ENCODE measurements at regions of chr2 and their contacts with region 1.

Region 1: GRCh38 chr2:181123798-181124231 is 143.4 kb downstream of the UBE2E3 start:
- DNase-seq: peak in 8 of 9 donors; percentile 54 to 91 (median 83)
- ATAC-seq: peak; percentile 98
- H3K4me3 ChIP-seq: peak overlapping the region; percentile 37
- H3K4me3 Mint-ChIP-seq: peak overlapping the region; percentile 73 to 92 (median 82)
- H3K27ac ChIP-seq: peak overlapping the region; percentile 83
- H3K27ac Mint-ChIP-seq: peak overlapping the region; percentile 94 to 100 (median 98)
- H3K4me1 ChIP-seq: peaks cover 39 to 47% of the 10 kb centered on the region in 2 donors
- H3K4me1 Mint-ChIP-seq: peaks cover 27 to 81% (median 78%) of the 10 kb centered on the region in 7 donors
- H3K27me3 ChIP-seq: no peaks in the 10 kb centered on the region
- H3K27me3 Mint-ChIP-seq: no peaks in the 10 kb centered on the region

Region 2: DNA sequence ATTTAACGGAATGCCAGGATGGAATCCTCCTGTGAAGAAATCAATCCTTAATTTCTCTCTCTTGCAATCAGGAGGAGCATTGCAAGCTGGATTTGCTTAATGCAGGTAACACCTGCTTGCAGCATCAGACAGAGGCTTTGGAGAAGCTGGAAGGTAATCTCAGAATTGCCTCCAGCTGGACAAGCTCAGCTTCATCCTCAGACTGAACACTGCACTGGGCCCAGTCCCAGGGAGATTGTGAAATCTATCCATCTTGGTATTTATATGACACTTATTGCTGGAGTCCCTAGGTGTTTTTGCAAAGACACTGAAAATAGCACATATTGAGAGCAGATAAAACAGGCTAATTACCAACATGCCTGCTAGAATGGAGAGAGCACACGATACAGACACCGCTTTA is 1679.8 kb before region 1 on chr2:
- CTCF ChIA-PET with region 1: no interaction called
- POLR2A ChIA-PET with region 1: no interaction called
- intact Hi-C with region 1: no loop called
- DNase-seq: no peak
- ATAC-seq: no peak
- H3K4me3 ChIP-seq: no peak overlapping the region
- H3K4me3 Mint-ChIP-seq: no peak overlapping the region
- H3K27ac ChIP-seq: no peak overlapping the region
- H3K27ac Mint-ChIP-seq: no peak overlapping the region
- H3K4me1 ChIP-seq: no peaks in the 10 kb centered on the region
- H3K4me1 Mint-ChIP-seq: no peaks in the 10 kb centered on the region
- H3K27me3 ChIP-seq: no peaks in the 10 kb centered on the region
- H3K27me3 Mint-ChIP-seq: peaks cover 11 to 34% (median 20%) of the 10 kb centered on the region in 5 donors

Region 3: GRCh38 chr2:180699657-180700361 is 424.0 kb before region 1 on chr2:
- CTCF ChIA-PET with region 1: no interaction called
- POLR2A ChIA-PET with region 1: no interaction called
- intact Hi-C with region 1: no loop called
- DNase-seq: no peak
- ATAC-seq: no peak
- H3K4me3 ChIP-seq: no peak overlapping the region
- H3K4me3 Mint-ChIP-seq: no peak overlapping the region
- H3K27ac ChIP-seq: no peak overlapping the region
- H3K27ac Mint-ChIP-seq: no peak overlapping the region
- H3K4me1 ChIP-seq: no peaks in the 10 kb centered on the region
- H3K4me1 Mint-ChIP-seq: no peaks in the 10 kb centered on the region
- H3K27me3 ChIP-seq: no peaks in the 10 kb centered on the region
- H3K27me3 Mint-ChIP-seq: peaks cover 0 to 4% (median 2%) of the 10 kb centered on the region in 5 donors

Region 4: GRCh38 chr2:181077128-181077709 is 46.6 kb before region 1 on chr2:
- CTCF ChIA-PET with region 1: no interaction called
- POLR2A ChIA-PET with region 1: no interaction called
- intact Hi-C with region 1: loop called in 1 of 2 experiments (anchors 1 kb)
- DNase-seq: peak in 7 of 9 donors; percentile 49 to 76 (median 64)
- ATAC-seq: peak; percentile 90
- H3K4me3 ChIP-seq: no peak overlapping the region
- H3K4me3 Mint-ChIP-seq: no peak overlapping the region
- H3K27ac ChIP-seq: no peak overlapping the region
- H3K27ac Mint-ChIP-seq: no peak overlapping the region
- H3K4me1 ChIP-seq: no peaks in the 10 kb centered on the region
- H3K4me1 Mint-ChIP-seq: peaks cover 0 to 11% (median 0%) of the 10 kb centered on the region in 7 donors
- H3K27me3 ChIP-seq: no peaks in the 10 kb centered on the region
- H3K27me3 Mint-ChIP-seq: peaks cover 0 to 14% (median 0%) of the 10 kb centered on the region in 5 donors

Region 5: GRCh38 chr2:181140414-181140813 is 16.6 kb after region 1 on chr2:
- CTCF ChIA-PET with region 1: interaction called, 7 read pairs
- POLR2A ChIA-PET with region 1: interaction called, 90 read pairs
- intact Hi-C with region 1: loop called (anchors 1 kb)
- DNase-seq: peak in 1 of 9 donors; percentile 29
- ATAC-seq: peak; percentile 30
- H3K4me3 ChIP-seq: peak overlapping the region; percentile 20
- H3K4me3 Mint-ChIP-seq: peak overlapping the region; percentile 31 to 94 (median 86)
- H3K27ac ChIP-seq: peak overlapping the region; percentile 78
- H3K27ac Mint-ChIP-seq: peak overlapping the region; percentile 93 to 100 (median 98)
- H3K4me1 ChIP-seq: peaks cover 46 to 66% of the 10 kb centered on the region in 2 donors
- H3K4me1 Mint-ChIP-seq: peaks cover 33 to 83% (median 75%) of the 10 kb centered on the region in 7 donors
- H3K27me3 ChIP-seq: no peaks in the 10 kb centered on the region
- H3K27me3 Mint-ChIP-seq: no peaks in the 10 kb centered on the region

Region 6: DNA sequence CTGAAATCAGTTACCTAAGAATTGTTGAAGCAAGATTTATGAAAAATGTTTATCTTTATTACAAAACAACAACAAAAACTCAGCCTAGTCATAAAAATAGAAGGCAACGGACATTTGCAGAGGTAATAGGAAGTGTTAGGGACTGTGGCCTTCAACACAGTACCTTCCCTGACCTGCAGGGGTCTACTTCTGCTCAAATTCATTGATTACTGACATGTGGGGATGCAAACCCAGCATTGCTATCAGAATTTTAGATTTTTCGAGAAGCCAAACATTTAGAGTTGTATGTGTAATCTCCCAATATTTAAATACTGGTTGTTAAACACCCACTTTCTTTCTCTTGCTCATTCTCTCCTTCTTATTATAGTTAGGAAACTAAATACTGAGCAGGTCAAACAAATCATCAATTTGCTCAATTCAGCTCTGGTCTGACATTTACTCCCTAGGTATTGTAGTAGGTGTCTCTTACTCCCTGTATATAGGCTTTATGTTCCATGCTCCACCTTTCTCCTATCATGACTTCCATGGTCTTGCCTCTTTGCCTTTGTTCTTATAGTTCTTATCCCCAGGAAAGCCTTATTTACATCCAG is 55.1 kb after region 1 on chr2:
- CTCF ChIA-PET with region 1: no interaction called
- POLR2A ChIA-PET with region 1: interaction called, 4 read pairs
- intact Hi-C with region 1: loop called in 1 of 2 experiments (anchors 5 kb)
- DNase-seq: peak in 6 of 9 donors; percentile 14 to 34 (median 30)
- ATAC-seq: peak; percentile 76
- H3K4me3 ChIP-seq: no peak overlapping the region
- H3K4me3 Mint-ChIP-seq: peak overlapping the region in 2 of 10 donors; percentile 19 to 25
- H3K27ac ChIP-seq: no peak overlapping the region
- H3K27ac Mint-ChIP-seq: peak overlapping the region in 8 of 9 donors; percentile 1 to 65 (median 44)
- H3K4me1 ChIP-seq: peaks cover 15 to 16% of the 10 kb centered on the region in 2 donors
- H3K4me1 Mint-ChIP-seq: peaks cover 7 to 58% (median 45%) of the 10 kb centered on the region in 7 donors
- H3K27me3 ChIP-seq: no peaks in the 10 kb centered on the region
- H3K27me3 Mint-ChIP-seq: no peaks in the 10 kb centered on the region

Region 7: GRCh38 chr2:181275643-181276070 is 151.8 kb after region 1 on chr2:
- CTCF ChIA-PET with region 1: interaction called, 3 read pairs
- POLR2A ChIA-PET with region 1: no interaction called
- intact Hi-C with region 1: loop called in 1 of 2 experiments (anchors 2 kb)
- DNase-seq: peak in 7 of 9 donors; percentile 24 to 38 (median 31)
- ATAC-seq: peak; percentile 93
- H3K4me3 ChIP-seq: no peak overlapping the region
- H3K4me3 Mint-ChIP-seq: peak overlapping the region in 5 of 10 donors; percentile 25 to 62 (median 35)
- H3K27ac ChIP-seq: peak overlapping the region; percentile 38
- H3K27ac Mint-ChIP-seq: peak overlapping the region; percentile 57 to 93 (median 83)
- H3K4me1 ChIP-seq: peaks cover 18 to 30% of the 10 kb centered on the region in 2 donors
- H3K4me1 Mint-ChIP-seq: peaks cover 18 to 56% (median 41%) of the 10 kb centered on the region in 7 donors
- H3K27me3 ChIP-seq: no peaks in the 10 kb centered on the region
- H3K27me3 Mint-ChIP-seq: no peaks in the 10 kb centered on the region

Region 8: GRCh38 chr2:182148344-182148743 is 1024.5 kb after region 1 on chr2:
- CTCF ChIA-PET with region 1: no interaction called
- POLR2A ChIA-PET with region 1: no interaction called
- intact Hi-C with region 1: no loop called
- DNase-seq: no peak
- ATAC-seq: no peak
- H3K4me3 ChIP-seq: no peak overlapping the region
- H3K4me3 Mint-ChIP-seq: no peak overlapping the region
- H3K27ac ChIP-seq: no peak overlapping the region
- H3K27ac Mint-ChIP-seq: no peak overlapping the region
- H3K4me1 ChIP-seq: no peaks in the 10 kb centered on the region
- H3K4me1 Mint-ChIP-seq: no peaks in the 10 kb centered on the region
- H3K27me3 ChIP-seq: no peaks in the 10 kb centered on the region
- H3K27me3 Mint-ChIP-seq: no peaks in the 10 kb centered on the region

Measured in naive thymus-derived CD4-positive, alpha-beta T cell (primary cell).